ENCODE measurements at regions of chr3 and their contacts with region 1.

Region 1: DNA sequence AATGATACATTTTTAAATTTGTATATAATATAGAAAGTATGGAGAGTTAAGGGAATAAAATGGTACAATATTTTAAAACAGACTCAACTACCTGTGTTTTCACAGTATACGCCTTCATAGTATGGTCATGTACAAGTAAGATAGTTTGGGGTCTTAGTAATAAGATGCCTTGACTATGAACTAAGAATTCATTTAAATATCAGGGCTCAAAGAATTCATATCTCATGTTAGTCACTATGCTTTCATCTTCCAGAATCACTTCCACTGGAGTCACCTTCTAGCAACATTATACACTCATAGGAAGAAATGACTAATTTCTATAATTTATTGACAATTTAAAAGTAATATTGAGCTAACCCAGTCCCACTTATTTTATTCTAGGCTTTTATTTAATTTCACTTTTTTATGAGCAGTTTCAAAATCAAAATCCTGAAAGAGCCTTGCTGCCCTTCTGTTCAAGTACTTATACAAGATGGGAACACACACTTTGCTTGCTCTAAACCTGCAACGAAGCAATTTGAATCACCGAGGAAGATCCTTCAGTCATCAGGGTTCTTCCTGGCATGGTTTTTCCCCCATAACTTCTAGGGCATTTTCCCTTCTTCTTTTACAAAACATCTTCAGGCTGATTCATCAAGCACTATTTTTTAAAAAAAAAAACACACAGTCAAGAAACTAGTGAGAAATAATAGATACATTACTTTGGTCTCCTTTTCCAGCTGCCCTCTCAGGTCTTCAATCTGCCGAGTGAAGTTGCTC is 94.1 kb downstream of the MYH15 start:
- DNase-seq: no peak

Region 2: DNA sequence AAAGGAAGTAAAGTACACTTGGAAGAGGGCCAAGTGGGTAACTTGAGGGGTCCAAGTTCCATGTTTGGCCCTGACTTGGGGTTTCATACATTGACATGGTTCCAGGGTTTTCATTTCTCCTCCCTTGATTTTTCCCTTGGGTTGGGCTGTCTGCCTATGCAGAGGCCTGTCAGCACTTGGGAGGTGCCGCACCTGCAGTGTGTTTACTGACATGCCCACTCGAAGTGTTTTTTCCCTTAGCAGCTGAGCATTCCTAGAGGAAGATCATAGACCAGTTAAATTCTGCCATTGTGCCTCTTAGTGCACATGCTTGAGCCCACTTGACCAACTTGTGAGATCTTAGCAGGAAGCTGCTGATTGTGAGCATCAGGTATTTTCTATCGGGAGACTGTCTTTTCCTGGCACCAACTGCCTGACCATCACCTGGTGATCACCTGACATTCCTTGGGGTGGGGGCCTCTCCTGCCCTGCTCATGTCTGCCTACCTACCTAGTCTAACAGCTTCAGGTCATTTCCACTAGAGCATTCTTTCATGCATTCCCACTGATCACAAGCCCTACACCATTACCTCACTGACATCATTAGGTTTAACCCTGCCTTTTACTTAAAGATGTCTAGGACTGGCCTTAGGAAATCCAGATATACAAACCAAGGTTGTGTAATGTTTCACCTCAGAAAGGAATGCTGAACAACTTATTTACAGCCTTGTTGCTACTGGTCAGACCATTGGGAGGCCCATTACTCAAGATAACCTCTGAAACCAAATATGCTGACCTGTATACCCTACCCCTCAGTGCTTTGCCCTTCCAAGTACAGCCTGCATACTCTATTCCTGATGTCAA is 393.8 kb before region 1 on chr3:
- intact Hi-C with region 1: no loop called
- DNase-seq: no peak

Region 3: DNA sequence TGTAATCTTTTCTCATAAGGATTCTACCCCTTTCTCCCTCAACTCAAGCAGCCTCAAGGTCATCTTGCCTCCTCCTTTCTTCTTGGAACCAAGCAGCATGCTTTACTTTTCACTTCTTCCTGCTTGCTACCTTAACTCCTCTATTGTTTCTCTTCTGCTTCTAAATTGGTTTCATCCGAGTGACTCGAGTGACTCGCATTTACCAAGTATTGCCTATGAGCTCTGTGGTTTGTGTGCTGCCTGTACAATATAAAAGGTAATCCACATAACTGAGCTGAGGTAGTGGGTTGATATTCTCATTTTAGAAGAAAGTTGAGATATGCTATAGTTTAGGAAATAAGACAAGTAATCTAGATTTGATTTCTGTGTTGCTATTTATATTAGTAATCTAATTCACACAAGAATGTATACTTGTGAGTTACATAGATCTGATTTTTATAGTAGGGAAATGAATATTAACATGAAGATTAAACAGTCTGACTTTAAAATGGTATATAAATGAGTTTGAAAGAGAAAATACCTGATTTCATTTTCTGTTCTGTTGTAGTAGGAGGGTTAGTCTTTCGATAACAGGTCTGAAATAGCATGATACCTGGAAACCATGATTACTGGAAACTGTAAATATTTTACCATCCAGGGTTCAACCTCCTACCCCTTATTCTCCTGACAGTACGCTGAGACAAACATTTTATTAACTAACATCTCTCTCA is 114.4 kb before region 1 on chr3:
- intact Hi-C with region 1: no loop called
- DNase-seq: no peak

Region 4: DNA sequence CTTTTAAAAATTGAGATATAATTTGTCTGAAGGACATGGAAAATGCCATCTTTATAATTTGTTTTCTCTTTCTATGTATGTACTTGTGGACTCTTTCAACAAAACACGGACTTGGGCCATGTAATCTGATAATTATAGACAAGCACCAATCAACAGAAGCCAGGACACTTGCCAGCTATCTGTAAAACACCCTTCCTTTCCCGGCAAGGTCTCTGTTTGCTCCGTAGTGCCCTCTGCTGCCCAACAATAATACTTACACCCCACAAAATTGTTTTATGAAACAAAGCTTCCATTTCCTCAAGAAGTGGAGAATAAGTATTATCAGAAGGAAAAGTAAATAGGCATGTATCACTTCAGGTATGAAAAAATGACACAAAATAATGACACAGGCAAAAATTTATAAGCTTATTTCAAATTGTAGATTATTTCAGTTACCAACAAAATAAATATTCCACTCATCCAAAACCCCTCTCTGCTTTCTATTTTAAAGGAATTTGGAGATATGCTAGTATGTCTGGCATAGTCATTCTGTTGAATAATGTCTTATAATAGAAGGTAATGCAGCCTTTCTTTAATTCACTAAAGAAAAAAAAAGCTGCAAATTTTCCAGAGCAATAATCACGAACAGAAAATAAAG is 61.3 kb after region 1 on chr3:
- intact Hi-C with region 1: loop called in 1 of 2 experiments (anchors 2 kb)
- DNase-seq: no peak

Region 5: GRCh38 chr3:108505811-108506210 is 89.5 kb after region 1 on chr3:
- intact Hi-C with region 1: no loop called
- DNase-seq: no peak